ENCODE measurements at regions of chr12 and their contacts with region 1.

Region 1: DNA sequence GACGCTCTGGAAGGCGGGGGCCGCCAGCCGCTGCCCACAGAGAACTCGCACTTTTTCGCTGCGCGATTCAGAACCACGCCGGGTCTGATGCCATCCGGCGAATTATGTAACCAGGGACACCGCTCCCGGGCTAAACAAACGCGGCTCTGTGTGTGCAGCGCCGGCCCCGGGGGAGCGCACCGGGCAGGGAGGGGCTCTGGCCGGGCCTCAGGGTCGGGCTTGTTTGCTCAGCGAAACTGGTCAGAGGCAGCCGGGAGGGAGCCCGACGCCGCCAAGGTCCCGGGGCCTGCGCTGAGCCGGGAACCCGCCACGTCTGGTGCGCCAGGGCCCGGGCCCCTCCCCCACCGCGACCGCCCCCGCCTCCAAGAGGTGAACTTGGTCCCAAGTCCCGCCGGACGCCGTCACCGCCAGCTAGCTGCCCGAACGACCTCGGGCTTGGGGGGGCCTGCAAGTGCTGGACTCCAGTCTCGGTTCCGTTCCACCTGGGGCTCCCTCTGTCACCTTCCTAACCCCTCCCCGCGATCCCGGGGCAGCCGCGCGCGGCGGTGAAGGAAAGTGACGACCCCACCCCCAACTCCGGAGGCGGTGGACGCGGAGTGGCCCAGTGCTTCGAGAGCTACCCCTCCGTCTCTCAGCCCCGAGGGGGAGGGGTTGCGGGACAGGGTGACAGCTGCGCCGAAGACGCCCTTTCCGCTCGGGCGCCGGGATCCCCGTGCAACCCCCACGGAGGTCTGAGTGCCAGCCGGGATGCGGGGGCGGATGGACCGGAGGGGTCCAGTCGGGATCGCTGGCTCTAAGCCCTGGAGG is 848 bp downstream of the CTDSP2 start:
- DNase-seq: peak; percentile 89 to 94
- ATAC-seq: peak; percentile 70
- H3K4me3 ChIP-seq: peak overlapping the region; percentile 87 to 98
- H3K27ac ChIP-seq: peak overlapping the region; percentile 99 to 100
- H3K4me1 ChIP-seq: peaks cover 7 to 8% of the 10 kb centered on the region in 2 donors
- H3K27me3 ChIP-seq: no peaks in the 10 kb centered on the region

Region 2: DNA sequence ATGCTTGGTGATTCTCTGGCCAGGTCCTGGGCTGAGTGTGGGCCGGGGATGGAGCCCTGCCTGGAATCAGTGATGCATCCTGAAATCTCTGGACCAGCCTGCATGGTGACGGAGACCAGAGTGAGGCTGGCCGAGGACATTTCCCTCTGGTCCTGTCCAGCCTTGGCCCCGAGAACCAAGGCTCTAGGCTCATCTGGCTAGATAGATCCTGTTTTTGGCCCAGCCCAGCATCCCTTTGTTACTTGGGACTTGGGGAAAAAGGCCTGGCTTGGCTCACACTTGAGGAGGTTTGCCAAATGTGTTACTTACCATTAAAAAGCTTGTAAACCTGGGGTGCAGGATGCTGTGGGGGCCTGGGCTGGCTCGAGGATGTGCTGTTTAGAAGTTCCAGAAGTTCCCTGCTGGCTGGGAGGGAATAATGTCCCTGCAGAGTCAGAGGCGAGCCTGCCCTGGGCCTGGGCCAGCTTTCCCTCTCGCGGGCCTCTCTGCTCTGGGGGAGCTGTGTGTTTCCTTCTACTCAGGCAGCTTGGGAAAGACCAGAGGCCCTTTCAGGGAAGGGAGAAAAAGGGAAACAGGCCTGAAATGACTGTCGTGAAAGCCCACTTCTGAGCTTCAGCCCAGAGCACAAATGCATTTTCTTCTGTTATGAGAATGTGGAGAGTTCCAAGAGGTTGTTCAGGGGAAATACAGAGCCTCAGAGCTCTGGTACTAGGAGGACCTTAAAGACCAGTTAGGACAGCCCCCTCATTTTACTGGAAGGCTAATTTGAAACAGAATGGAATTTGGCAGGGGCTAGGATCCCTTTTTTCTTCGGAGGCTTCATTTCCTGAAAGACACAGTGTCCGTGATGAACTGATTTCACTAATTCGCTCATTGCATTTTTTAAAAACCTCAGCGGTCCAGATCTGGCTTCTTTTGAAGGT is 48.0 kb after region 1 on chr12:
- intact Hi-C with region 1: loop called in 1 of 2 experiments (anchors 2 kb)
- DNase-seq: peak; percentile 93 to 95
- ATAC-seq: peak; percentile 79
- H3K4me3 ChIP-seq: no peak overlapping the region
- H3K27ac ChIP-seq: peak overlapping the region; percentile 79 to 99
- H3K4me1 ChIP-seq: peaks cover 6 to 7% of the 10 kb centered on the region in 2 donors
- H3K27me3 ChIP-seq: no peaks in the 10 kb centered on the region